CD4-positive, alpha-beta T cell (primary cell): ENCODE measurements at regions of chr7 and their contacts with region 1.

Region 1: DNA sequence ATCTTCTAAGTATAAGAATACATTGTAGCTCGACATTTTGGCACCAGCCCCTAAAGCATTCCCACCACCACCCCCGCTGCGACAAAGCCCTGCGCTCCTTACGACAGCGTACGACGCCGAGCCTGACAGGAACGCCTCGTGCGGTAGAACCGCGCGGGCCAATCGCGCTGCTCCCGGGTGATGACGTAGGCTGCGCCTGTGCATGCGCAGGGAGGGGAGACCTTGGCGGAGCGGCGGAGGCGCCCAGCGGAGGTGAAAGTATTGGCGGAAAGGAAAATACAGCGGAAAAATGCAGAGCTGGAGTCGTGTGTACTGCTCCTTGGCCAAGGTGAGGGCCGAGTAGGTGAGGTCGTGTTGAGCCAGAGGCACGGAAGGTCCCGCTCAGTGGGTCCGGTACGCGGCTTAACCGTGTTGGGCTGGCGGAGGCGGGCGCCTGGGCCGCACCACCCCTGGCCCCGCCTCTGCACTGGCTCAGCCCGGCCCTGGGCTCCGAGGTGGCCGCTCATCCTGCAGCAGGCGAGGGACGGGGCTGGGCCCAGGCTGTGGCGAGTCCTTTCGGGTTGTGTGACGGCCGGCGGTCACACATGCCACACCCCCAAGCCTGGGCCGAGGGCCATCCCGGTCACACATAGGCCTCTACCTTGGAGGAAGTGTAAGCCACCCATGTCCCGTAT is at the start of gene DLD:
- DNase-seq: peak; percentile 84 to 97 (median 90)
- ATAC-seq: peak; percentile 96
- H3K4me3 ChIP-seq: peak within 1 kb of the TSS; percentile 78
- H3K4me3 Mint-ChIP-seq: peak within 1 kb of the TSS; percentile 99
- H3K27ac ChIP-seq: peak within 1 kb of the TSS; percentile 85 to 89
- H3K27ac Mint-ChIP-seq: peak within 1 kb of the TSS; percentile 95
- H3K4me1 ChIP-seq: peaks cover 27% of the 10 kb centered on the region
- H3K4me1 Mint-ChIP-seq: peaks cover 54% of the 10 kb centered on the region
- H3K27me3 ChIP-seq: no peaks in the 10 kb centered on the region
- H3K27me3 Mint-ChIP-seq: no peaks in the 10 kb centered on the region
- CTCF ChIP-seq: no peak
- total RNA-seq, gene DLD: 74.3 to 74.9 TPM

Region 2: GRCh38 chr7:107579885-107580715 is 311.0 kb before region 1 on chr7 and contains the start of gene BCAP29:
- CTCF ChIA-PET with region 1: no interaction called
- POLR2A ChIA-PET with region 1: no interaction called
- intact Hi-C with region 1: loop called in 1 of 2 experiments (anchors 10 kb)
- DNase-seq: peak; percentile 31 to 87 (median 54)
- ATAC-seq: peak; percentile 95
- H3K4me3 ChIP-seq: peak within 1 kb of the TSS; percentile 87
- H3K4me3 Mint-ChIP-seq: peak within 1 kb of the TSS; percentile 93
- H3K27ac ChIP-seq: peak within 1 kb of the TSS; percentile 26 to 50
- H3K27ac Mint-ChIP-seq: peak within 1 kb of the TSS; percentile 79
- H3K4me1 ChIP-seq: peaks cover 7% of the 10 kb centered on the region
- H3K4me1 Mint-ChIP-seq: peaks cover 26% of the 10 kb centered on the region
- H3K27me3 ChIP-seq: no peaks in the 10 kb centered on the region
- H3K27me3 Mint-ChIP-seq: no peaks in the 10 kb centered on the region
- CTCF ChIP-seq: no peak
- total RNA-seq, gene BCAP29: 11.0 to 11.7 TPM